ENCODE measurements at regions of chr6 and their contacts with region 1.

Region 1: GRCh38 chr6:38057994-38058393 is 238.5 kb downstream of the ZFAND3 start:
- DNase-seq: peak; percentile 85
- H3K4me3 Mint-ChIP-seq: no peak overlapping the region
- H3K27ac Mint-ChIP-seq: peak overlapping the region; percentile 30
- H3K4me1 Mint-ChIP-seq: peaks cover 29% of the 10 kb centered on the region
- H3K27me3 Mint-ChIP-seq: no peaks in the 10 kb centered on the region

Region 2: DNA sequence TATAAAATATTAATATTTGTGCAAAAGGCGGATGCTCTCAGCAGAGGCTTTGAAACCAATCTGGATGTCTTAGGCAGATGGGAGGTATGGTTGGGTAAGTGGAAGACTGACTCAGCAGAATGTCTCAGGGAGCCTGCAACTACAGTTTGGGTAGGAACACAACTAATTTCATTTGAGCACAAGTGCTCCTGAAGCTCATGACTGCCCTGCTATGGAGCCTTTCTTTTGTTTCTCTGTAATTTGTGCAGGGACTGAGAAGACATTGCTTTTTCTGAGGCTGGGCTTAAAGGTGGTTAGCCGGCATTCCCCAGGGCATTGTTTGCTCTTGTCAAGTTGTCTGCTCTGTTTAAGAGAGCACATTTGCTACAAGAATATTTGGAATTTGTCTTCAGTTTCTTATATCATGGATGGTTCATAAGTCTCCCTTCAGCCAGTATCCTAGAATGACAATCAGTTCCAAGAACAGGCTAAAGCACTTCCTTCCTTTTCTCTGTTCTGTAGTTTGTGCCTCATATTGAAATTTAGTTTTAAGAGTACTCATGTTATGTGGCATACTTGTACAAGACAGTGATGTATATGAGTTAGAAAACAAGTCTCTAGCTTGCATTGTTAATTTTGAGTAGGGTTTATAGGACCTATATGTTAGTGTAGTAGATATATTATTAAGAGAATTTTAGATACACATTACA is 30.2 kb before region 1 on chr6:
- CTCF ChIA-PET with region 1: no interaction called
- POLR2A ChIA-PET with region 1: no interaction called
- intact Hi-C with region 1: loop called (anchors 1 kb)
- DNase-seq: no peak
- H3K4me3 Mint-ChIP-seq: no peak overlapping the region
- H3K27ac Mint-ChIP-seq: no peak overlapping the region
- H3K4me1 Mint-ChIP-seq: peaks cover 49% of the 10 kb centered on the region
- H3K27me3 Mint-ChIP-seq: no peaks in the 10 kb centered on the region

Region 3: DNA sequence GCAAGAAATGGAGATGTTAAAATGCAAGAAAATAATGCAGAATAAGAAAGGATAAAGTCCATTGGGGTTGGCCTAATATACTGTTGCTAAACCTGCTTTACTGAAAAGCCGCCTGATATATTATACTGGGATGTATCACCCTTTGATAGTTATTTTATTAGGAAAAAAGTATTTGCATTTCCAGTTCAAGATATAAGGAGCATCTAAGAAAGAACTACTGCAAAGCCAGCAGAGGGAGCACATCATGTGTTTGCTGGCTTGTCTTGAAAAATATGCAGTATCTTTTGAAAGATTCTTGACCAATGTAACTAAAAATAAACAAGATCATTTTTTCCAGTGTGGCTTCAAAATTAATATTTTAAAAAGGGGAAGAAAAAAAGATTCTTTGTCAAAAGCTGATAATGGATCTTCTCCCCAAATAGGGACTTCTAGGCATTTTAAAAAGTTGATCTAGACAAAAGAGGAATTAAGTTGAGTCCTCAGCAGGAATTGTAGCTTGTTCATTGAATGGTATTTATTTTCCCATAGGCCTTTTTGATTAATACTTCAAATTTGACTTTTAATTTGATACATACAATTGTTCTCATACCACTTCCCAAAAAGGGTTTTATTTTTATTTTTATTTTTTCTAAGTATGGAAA is 23.6 kb before region 1 on chr6:
- CTCF ChIA-PET with region 1: interaction called, 5 read pairs
- POLR2A ChIA-PET with region 1: no interaction called
- intact Hi-C with region 1: loop called (anchors 1 kb)
- DNase-seq: no peak
- H3K4me3 Mint-ChIP-seq: no peak overlapping the region
- H3K27ac Mint-ChIP-seq: no peak overlapping the region
- H3K4me1 Mint-ChIP-seq: peaks cover 40% of the 10 kb centered on the region
- H3K27me3 Mint-ChIP-seq: no peaks in the 10 kb centered on the region

Region 4: GRCh38 chr6:38131527-38131965 is 73.6 kb after region 1 on chr6:
- CTCF ChIA-PET with region 1: no interaction called
- POLR2A ChIA-PET with region 1: no interaction called
- intact Hi-C with region 1: loop called (anchors 1 kb)
- DNase-seq: peak; percentile 37
- H3K4me3 Mint-ChIP-seq: no peak overlapping the region
- H3K27ac Mint-ChIP-seq: no peak overlapping the region
- H3K4me1 Mint-ChIP-seq: peaks cover 46% of the 10 kb centered on the region
- H3K27me3 Mint-ChIP-seq: no peaks in the 10 kb centered on the region

Region 5: DNA sequence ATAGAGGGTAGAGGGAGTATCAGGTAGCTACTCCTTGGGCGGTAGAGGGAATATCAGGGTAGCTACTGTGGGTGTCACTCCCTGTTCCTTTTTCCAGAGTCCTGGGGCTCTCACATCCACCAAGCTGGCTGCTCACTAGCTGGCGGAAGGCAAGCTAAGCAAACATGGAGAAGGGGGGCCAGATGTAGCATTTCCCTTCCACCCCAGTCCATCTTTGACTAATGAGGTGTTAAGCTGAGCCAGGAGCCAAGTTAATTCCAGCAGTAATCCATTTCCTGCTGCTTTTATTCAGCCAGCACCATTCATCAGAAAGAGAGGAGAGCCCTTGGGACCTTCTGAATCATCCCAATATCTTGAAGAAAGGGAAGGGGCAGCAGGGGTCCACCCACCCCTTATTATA is 91.5 kb after region 1 on chr6:
- CTCF ChIA-PET with region 1: no interaction called
- POLR2A ChIA-PET with region 1: no interaction called
- intact Hi-C with region 1: no loop called
- DNase-seq: no peak
- H3K4me3 Mint-ChIP-seq: no peak overlapping the region
- H3K27ac Mint-ChIP-seq: no peak overlapping the region
- H3K4me1 Mint-ChIP-seq: no peaks in the 10 kb centered on the region
- H3K27me3 Mint-ChIP-seq: no peaks in the 10 kb centered on the region

Region 6: DNA sequence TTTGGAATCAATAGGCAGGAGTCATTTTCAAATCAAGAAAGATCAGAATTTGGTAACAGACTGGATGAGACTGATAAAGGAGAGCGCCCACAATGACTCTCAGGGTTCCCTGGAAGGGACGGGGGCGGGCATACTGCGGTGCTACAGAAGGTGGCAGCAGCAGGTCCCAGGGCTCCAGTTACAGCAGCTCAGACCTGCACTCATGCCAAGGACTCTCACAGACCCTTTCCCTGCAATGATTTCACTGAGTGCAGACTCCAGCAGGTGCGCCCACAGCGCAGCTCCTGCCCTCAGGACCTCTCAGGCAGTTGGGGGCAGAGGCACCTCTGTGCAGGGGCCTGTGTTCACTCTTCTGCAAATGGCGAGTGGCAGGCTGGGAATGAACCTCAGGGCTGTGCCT is 121.3 kb after region 1 on chr6:
- CTCF ChIA-PET with region 1: no interaction called
- POLR2A ChIA-PET with region 1: no interaction called
- intact Hi-C with region 1: no loop called
- DNase-seq: peak; percentile 21
- H3K4me3 Mint-ChIP-seq: no peak overlapping the region
- H3K27ac Mint-ChIP-seq: no peak overlapping the region
- H3K4me1 Mint-ChIP-seq: no peaks in the 10 kb centered on the region
- H3K27me3 Mint-ChIP-seq: no peaks in the 10 kb centered on the region

Region 7: GRCh38 chr6:38404900-38405556 is 347.0 kb after region 1 on chr6:
- CTCF ChIA-PET with region 1: interaction called, 3 read pairs
- POLR2A ChIA-PET with region 1: no interaction called
- intact Hi-C with region 1: loop called (anchors 1 kb)
- DNase-seq: peak; percentile 11
- H3K4me3 Mint-ChIP-seq: no peak overlapping the region
- H3K27ac Mint-ChIP-seq: peak overlapping the region; percentile 47
- H3K4me1 Mint-ChIP-seq: peaks cover 31% of the 10 kb centered on the region
- H3K27me3 Mint-ChIP-seq: no peaks in the 10 kb centered on the region

Measured in activated CD4-positive, alpha-beta memory T cell treated with anti-CD3 and anti-CD28 coated beads for 36 hours (primary cell).